Heart right ventricle (tissue), 16 donors: ENCODE measurements at regions of chr5 and their contacts with region 1.

Region 1: GRCh38 chr5:77774981-77775789 is 954 bp downstream of the TBCA start:
- DNase-seq: peak in 1 of 2 donors; percentile 48
- ATAC-seq: peak in 3 of 8 donors; percentile 1 to 36 (median 16)
- H3K4me3 ChIP-seq: peak overlapping the region; percentile 25 to 90 (median 77)
- H3K27ac ChIP-seq: peak overlapping the region; percentile 77 to 98 (median 92)
- H3K4me1 ChIP-seq: peaks cover 3 to 56% (median 49%) of the 10 kb centered on the region in 9 donors
- H3K27me3 ChIP-seq: no peaks in the 10 kb centered on the region
- CTCF ChIP-seq: no peak

Region 2: GRCh38 chr5:77513321-77513720 is 261.9 kb before region 1 on chr5:
- intact Hi-C with region 1: no loop called
- DNase-seq: no peak
- ATAC-seq: no peak
- H3K4me3 ChIP-seq: no peak overlapping the region
- H3K27ac ChIP-seq: no peak overlapping the region
- H3K4me1 ChIP-seq: no peaks in the 10 kb centered on the region
- H3K27me3 ChIP-seq: peaks cover 0 to 29% (median 0%) of the 10 kb centered on the region in 7 donors
- CTCF ChIP-seq: no peak

Region 3: GRCh38 chr5:77709993-77710685 is 65.0 kb before region 1 on chr5:
- intact Hi-C with region 1: loop called in 1 of 10 experiments (anchors 5 kb)
- DNase-seq: no peak
- ATAC-seq: no peak
- H3K4me3 ChIP-seq: no peak overlapping the region
- H3K27ac ChIP-seq: no peak overlapping the region
- H3K4me1 ChIP-seq: peaks cover 0 to 3% (median 0%) of the 10 kb centered on the region in 9 donors
- H3K27me3 ChIP-seq: no peaks in the 10 kb centered on the region
- CTCF ChIP-seq: no peak

Region 4: DNA sequence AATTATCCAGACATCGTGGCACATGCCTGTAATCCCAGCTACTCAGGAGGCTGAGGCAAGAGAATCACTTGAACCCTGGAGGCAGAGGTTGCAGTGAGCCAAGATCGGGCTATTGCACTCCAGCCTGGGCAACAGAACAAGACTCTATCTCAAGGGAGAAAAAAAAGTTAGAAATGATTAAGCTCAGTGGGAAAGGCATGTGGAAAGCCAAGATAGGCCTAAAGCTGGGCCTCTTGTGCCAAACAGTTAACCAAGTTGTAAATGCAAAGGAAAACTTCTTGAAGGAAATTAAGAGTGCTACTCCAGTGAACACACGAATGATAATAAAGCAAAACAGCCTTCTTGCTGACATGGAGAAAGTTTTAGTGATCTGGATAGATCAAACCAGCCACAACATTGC is 42.1 kb before region 1 on chr5:
- intact Hi-C with region 1: no loop called
- DNase-seq: no peak
- ATAC-seq: peak in 1 of 8 donors; percentile 37
- H3K4me3 ChIP-seq: no peak overlapping the region
- H3K27ac ChIP-seq: no peak overlapping the region
- H3K4me1 ChIP-seq: peaks cover 0 to 17% (median 11%) of the 10 kb centered on the region in 9 donors
- H3K27me3 ChIP-seq: no peaks in the 10 kb centered on the region
- CTCF ChIP-seq: no peak

Region 5: GRCh38 chr5:78235289-78235688 is 460.1 kb after region 1 on chr5:
- intact Hi-C with region 1: no loop called
- DNase-seq: no peak
- ATAC-seq: no peak
- H3K4me3 ChIP-seq: no peak overlapping the region
- H3K27ac ChIP-seq: no peak overlapping the region
- H3K4me1 ChIP-seq: no peaks in the 10 kb centered on the region
- H3K27me3 ChIP-seq: no peaks in the 10 kb centered on the region
- CTCF ChIP-seq: no peak